Posterior vena cava (tissue), 2 donors: ENCODE measurements at regions of chr9 and their contacts with region 1.

Region 1: GRCh38 chr9:71329873-71330272 is 208.5 kb upstream of the TRPM3 start:
- DNase-seq: no peak

Region 2: DNA sequence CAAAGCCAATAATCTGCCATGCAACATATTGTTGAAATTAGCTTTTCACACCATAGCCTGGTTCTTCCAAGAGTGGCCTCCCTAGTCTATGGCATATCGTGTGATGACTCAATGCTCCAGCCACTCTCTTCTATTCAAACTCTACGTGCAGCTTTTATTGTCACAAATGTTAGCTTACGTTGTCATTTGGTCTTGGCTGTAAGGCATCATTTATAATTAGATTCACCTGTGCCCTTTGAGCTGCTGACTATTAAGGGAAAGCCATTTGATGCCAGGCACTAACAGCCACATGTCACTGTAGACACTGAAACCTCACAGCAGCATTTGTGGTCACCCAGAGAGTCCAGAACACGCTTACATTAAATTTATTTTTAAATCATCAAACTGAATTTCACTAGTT is 1724.5 kb before region 1 on chr9:
- intact Hi-C with region 1: no loop called
- DNase-seq: no peak

Region 3: GRCh38 chr9:71383308-71383940 is 53.6 kb after region 1 on chr9:
- intact Hi-C with region 1: loop called in 1 of 2 experiments (anchors 2 kb)
- DNase-seq: no peak